ENCODE measurements at regions of chr12 and their contacts with region 1.

Region 1: GRCh38 chr12:49347384-49348237 is 923 bp downstream of the DNAJC22 start:
- DNase-seq: peak; percentile 82
- H3K4me3 Mint-ChIP-seq: peak overlapping the region; percentile 36
- H3K27ac Mint-ChIP-seq: no peak overlapping the region
- H3K4me1 Mint-ChIP-seq: peaks cover 36% of the 10 kb centered on the region
- H3K27me3 Mint-ChIP-seq: peaks cover 55% of the 10 kb centered on the region

Region 2: GRCh38 chr12:48936379-48936979 is 411.1 kb before region 1 on chr12:
- CTCF ChIA-PET with region 1: no interaction called
- POLR2A ChIA-PET with region 1: no interaction called
- intact Hi-C with region 1: no loop called
- DNase-seq: peak; percentile 85
- H3K4me3 Mint-ChIP-seq: no peak overlapping the region
- H3K27ac Mint-ChIP-seq: no peak overlapping the region
- H3K4me1 Mint-ChIP-seq: peaks cover 22% of the 10 kb centered on the region
- H3K27me3 Mint-ChIP-seq: no peaks in the 10 kb centered on the region

Region 3: DNA sequence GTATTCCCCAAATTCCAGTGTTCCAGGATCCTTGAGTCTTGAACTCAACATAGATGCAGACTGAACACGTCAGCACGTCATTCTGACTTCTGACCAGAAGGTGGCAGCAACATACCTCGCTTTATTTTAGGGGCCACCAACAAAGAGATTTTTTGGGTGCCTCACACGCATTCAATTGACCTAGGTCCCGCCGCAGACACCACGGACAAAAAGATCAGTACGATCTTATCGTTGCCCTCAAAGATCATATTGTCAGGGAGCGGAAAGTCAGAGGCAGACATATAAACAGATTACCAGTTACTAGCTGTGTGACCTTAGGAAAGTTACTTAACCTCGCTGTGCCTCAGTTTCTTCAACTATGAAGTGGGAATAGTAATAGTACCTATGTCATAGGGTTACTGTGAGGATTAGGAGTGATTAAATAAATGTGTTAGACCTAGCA is 59.2 kb before region 1 on chr12:
- CTCF ChIA-PET with region 1: interaction called, 234 read pairs
- POLR2A ChIA-PET with region 1: interaction called, 7 read pairs
- intact Hi-C with region 1: loop called (anchors 1 kb)
- DNase-seq: peak; percentile 80
- H3K4me3 Mint-ChIP-seq: no peak overlapping the region
- H3K27ac Mint-ChIP-seq: no peak overlapping the region
- H3K4me1 Mint-ChIP-seq: no peaks in the 10 kb centered on the region
- H3K27me3 Mint-ChIP-seq: peaks cover 23% of the 10 kb centered on the region

Region 4: GRCh38 chr12:49304161-49304560 is 43.5 kb before region 1 on chr12:
- CTCF ChIA-PET with region 1: interaction called, 234 read pairs
- POLR2A ChIA-PET with region 1: no interaction called
- intact Hi-C with region 1: no loop called
- DNase-seq: no peak
- H3K4me3 Mint-ChIP-seq: no peak overlapping the region
- H3K27ac Mint-ChIP-seq: no peak overlapping the region
- H3K4me1 Mint-ChIP-seq: peaks cover 6% of the 10 kb centered on the region
- H3K27me3 Mint-ChIP-seq: peaks cover 25% of the 10 kb centered on the region

Region 5: DNA sequence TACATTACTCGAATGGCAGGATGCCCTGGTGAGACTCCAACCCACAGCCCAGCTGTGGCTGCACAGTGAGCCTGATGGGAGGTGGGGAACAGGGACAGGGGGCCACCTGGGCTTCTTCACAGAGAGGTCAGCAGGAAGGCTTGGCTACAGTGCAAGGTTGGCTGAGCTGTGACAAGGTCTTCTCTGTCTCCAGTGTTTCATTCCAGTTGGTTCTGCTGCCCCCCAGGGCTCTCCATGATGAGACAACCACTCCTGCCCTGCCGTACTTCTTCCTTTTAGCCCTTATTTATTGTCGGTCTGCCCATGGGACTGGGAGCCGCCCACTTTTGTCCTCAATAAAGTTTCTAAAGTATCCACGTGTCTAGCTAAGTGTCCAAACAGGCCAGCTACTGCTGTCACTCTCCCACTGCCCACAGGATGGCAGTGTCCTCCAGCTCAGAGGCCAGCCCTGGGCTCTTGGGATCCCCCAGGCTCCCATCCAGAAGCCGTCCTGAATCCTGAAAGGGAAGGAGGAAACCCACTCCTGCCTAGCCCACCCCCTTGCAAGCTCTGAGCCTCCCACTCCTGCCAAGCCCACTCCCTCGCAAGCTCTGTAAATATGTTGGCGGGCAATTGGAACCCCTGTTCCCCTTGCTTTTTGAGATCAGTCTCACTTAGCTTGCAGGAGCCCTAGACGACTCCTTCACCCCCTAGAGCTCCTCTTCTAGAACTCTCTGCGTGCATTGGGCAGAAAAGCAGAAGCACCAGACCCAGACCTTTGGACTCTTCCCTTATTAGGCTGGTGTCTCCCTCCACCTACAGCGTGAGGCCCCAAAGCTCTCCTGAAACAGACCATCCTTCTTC is 16.0 kb before region 1 on chr12:
- CTCF ChIA-PET with region 1: interaction called, 45 read pairs
- POLR2A ChIA-PET with region 1: interaction called, 3 read pairs
- intact Hi-C with region 1: no loop called
- DNase-seq: peak; percentile 32
- H3K4me3 Mint-ChIP-seq: no peak overlapping the region
- H3K27ac Mint-ChIP-seq: no peak overlapping the region
- H3K4me1 Mint-ChIP-seq: peaks cover 10% of the 10 kb centered on the region
- H3K27me3 Mint-ChIP-seq: peaks cover 32% of the 10 kb centered on the region

Region 6: DNA sequence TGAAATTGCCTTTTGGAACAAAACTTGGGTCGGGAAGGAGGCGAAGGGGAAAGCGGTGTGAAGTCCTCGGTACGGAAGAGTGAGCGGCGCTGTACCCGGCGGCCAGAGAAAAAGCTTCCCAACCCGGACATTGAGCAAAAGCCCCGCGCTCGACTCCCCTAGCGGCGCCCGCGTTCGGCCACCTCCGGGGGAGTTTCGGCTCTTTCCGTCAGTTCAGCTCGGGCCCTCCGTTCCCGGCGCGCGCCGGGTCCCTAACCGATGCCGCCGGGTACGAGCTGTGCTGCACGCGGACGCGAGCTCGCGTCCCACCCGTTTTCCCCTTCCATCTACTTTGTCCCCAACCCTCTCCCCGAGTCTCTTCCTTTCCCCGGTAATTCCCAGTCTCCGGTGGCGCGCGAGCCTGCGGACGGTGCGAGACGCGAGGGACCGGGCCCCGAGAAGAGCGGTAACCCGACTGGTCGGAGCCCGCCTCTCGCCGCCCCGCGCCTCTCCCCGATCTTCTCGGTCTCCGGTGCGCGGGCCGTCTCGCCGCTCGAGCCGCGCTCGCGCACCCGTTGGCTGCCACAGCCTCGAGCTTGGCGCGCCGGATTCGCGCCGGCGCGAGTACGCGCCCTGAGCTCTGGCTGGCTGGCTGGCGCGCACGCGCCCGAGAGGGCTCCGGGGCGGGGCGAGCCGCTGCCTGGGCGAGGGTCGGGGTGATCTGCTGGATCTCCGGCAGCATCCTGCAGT is 19.2 kb after region 1 on chr12:
- CTCF ChIA-PET with region 1: interaction called, 98 read pairs
- POLR2A ChIA-PET with region 1: interaction called, 10 read pairs
- intact Hi-C with region 1: no loop called
- DNase-seq: peak; percentile 93
- H3K4me3 Mint-ChIP-seq: peak overlapping the region; percentile 95
- H3K27ac Mint-ChIP-seq: peak overlapping the region; percentile 95
- H3K4me1 Mint-ChIP-seq: peaks cover 23% of the 10 kb centered on the region
- H3K27me3 Mint-ChIP-seq: no peaks in the 10 kb centered on the region